Activated CD4-positive, alpha-beta memory T cell treated with anti-CD3 and anti-CD28 coated beads for 36 hours (primary cell): ENCODE measurements at regions of chr1 and their contacts with region 1.

Region 1: DNA sequence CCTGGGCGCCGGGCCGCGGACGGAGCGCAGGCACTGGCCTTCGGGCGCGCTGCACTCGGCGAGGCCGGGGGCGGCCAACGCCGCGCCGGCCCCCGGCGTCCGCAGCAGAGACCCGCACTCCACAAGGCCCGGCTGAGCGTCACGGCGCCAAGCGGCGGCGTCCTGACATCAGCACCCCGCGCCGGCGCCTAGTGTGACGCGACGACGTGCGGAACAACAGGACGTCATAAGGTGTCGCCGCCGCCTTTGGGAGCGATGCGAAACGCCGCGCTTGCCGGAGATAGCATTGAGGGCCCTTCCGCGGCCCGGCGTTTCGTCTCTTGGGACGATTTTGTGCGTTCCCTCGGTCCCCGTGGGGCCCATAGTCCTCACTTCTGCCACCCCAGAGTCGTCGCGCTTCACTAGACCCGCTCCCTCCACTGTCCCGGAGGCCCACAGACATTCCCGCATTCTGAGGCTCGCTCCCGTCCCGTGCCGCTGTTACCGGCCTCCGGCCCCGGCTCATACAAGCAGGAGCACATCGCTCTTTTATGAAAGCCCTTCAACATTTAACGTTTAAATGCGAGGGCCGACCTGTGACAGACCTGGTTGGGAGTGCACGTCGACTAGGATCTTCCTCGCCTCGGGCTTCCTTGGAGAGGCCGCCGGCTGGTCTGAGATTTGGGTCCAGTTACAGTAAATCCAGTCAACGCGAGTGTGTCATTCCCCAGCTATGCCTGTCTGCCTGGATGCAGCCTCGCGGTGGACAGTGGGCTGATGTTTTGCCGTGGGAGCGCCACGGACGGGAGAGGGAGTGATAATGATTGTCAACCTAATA is at the start of gene SSU72:
- DNase-seq: peak; percentile 94
- H3K4me3 Mint-ChIP-seq: peak within 1 kb of the TSS; percentile 94
- H3K27ac Mint-ChIP-seq: peak within 1 kb of the TSS; percentile 96
- H3K4me1 Mint-ChIP-seq: peaks cover 27% of the 10 kb centered on the region
- H3K27me3 Mint-ChIP-seq: no peaks in the 10 kb centered on the region
- total RNA-seq, gene SSU72: 106 to 107 TPM

Region 2: DNA sequence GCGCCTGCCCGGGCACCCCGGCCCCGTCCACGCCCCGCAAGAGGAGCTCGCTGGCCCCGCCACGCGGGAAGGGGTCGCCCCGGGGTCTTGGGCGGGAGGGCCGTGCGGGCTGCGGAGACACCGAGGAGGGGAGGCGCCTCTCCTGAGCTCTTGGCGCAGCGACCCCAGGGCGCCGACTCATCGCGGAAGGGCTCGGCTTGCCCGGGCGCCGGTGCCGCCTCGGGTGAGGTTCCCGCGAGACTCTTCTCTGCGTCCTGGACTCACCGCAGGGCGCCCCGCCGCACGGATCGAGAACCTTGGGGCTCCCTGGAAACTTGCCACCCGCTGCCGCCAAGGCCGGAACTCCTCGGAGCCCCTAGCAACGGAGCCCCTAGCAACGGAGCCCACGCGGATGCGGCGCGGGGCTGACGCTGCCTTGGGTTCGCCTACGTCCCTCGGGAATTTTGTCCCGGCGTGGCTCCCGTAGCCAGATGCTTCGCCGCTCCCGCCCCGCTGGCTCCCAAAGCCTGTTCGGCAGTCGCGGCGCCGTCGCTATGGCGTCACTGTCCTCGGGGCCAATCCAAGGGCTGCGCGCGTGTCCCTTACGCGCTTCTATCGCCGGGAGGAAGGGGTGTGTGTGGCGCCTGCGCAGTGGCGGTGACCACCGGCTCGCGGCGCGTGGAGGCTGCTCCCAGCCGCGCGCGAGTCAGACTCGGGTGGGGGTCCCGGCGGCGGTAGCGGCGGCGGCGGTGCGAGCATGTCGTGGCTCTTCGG is 63.2 kb before region 1 on chr1 and contains the start of gene ATAD3A:
- CTCF ChIA-PET with region 1: no interaction called
- POLR2A ChIA-PET with region 1: no interaction called
- intact Hi-C with region 1: loop called (anchors 1 kb)
- DNase-seq: peak; percentile 99
- H3K4me3 Mint-ChIP-seq: peak within 1 kb of the TSS; percentile 84
- H3K27ac Mint-ChIP-seq: peak within 1 kb of the TSS; percentile 86
- H3K4me1 Mint-ChIP-seq: peaks cover 13% of the 10 kb centered on the region
- H3K27me3 Mint-ChIP-seq: no peaks in the 10 kb centered on the region
- total RNA-seq, gene ATAD3A: 45.7 to 46.7 TPM

Region 3: GRCh38 chr1:1615256-1616044 is 40.5 kb after region 1 on chr1 and contains the start of gene MIB2:
- CTCF ChIA-PET with region 1: no interaction called
- POLR2A ChIA-PET with region 1: interaction called, 5 read pairs
- intact Hi-C with region 1: loop called (anchors 1 kb)
- DNase-seq: peak; percentile 97
- H3K4me3 Mint-ChIP-seq: peak within 1 kb of the TSS; percentile 90
- H3K27ac Mint-ChIP-seq: peak within 1 kb of the TSS; percentile 90
- H3K4me1 Mint-ChIP-seq: peaks cover 18% of the 10 kb centered on the region
- H3K27me3 Mint-ChIP-seq: no peaks in the 10 kb centered on the region
- total RNA-seq, gene MIB2: 31.1 to 36.1 TPM

Region 4: GRCh38 chr1:1721201-1721600 is 146.3 kb after region 1 on chr1:
- CTCF ChIA-PET with region 1: no interaction called
- POLR2A ChIA-PET with region 1: no interaction called
- intact Hi-C with region 1: loop called (anchors 5 kb)
- DNase-seq: no peak
- H3K4me3 Mint-ChIP-seq: no peak overlapping the region
- H3K27ac Mint-ChIP-seq: no peak overlapping the region
- H3K4me1 Mint-ChIP-seq: peaks cover 6% of the 10 kb centered on the region
- H3K27me3 Mint-ChIP-seq: no peaks in the 10 kb centered on the region